ENCODE measurements at regions of chr1 and their contacts with region 1.

Region 1: GRCh38 chr1:26608895-26609294 is 79.3 kb downstream of the RPS6KA1 start:
- DNase-seq: no peak

Region 2: DNA sequence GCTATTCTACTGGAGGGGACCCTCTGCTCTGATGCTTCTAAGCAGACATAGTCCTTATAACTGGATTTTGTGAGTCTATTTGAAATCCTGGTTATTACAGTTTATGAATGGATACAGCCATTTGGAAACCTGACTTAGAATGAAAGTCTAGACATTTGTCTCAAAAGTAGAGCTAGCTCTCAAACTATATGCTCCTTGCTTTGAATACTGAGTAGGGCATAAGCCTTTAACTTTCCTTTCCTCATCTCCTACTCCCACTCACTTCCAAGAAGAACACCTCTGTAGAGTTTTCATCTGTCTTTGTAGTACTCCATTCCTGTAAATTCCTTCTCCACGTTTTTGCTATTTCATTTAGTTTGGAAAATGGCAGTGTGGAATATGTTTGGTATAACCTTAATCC is 77.9 kb after region 1 on chr1:
- intact Hi-C with region 1: loop called in 1 of 2 experiments (anchors 5 kb)
- DNase-seq: no peak